ENCODE measurements at regions of chrX and their contacts with region 1.

Region 1: GRCh38 chrX:129606918-129607317 is 47.8 kb downstream of the APLN start:
- DNase-seq: peak; percentile 31
- H3K4me3 ChIP-seq: no peak overlapping the region
- H3K27ac ChIP-seq: no peak overlapping the region
- H3K4me1 ChIP-seq: no peaks in the 10 kb centered on the region
- H3K27me3 ChIP-seq: no peaks in the 10 kb centered on the region
- CTCF ChIP-seq: peak; percentile 72 to 89

Region 2: GRCh38 chrX:129496625-129497024 is 110.3 kb before region 1 on chrX:
- CTCF ChIA-PET with region 1: no interaction called
- dilution Hi-C with region 1: no loop called
- in situ Hi-C with region 1: no loop called
- intact Hi-C with region 1: no loop called
- DNase-seq: no peak
- H3K4me3 ChIP-seq: no peak overlapping the region
- H3K27ac ChIP-seq: no peak overlapping the region
- H3K4me1 ChIP-seq: no peaks in the 10 kb centered on the region
- H3K27me3 ChIP-seq: no peaks in the 10 kb centered on the region
- CTCF ChIP-seq: no peak

Region 3: GRCh38 chrX:129577473-129577872 is 29.4 kb before region 1 on chrX:
- CTCF ChIA-PET with region 1: no interaction called
- dilution Hi-C with region 1: no loop called
- in situ Hi-C with region 1: no loop called
- intact Hi-C with region 1: no loop called
- DNase-seq: peak; percentile 5
- H3K4me3 ChIP-seq: no peak overlapping the region
- H3K27ac ChIP-seq: no peak overlapping the region
- H3K4me1 ChIP-seq: no peaks in the 10 kb centered on the region
- H3K27me3 ChIP-seq: no peaks in the 10 kb centered on the region
- CTCF ChIP-seq: no peak

Region 4: DNA sequence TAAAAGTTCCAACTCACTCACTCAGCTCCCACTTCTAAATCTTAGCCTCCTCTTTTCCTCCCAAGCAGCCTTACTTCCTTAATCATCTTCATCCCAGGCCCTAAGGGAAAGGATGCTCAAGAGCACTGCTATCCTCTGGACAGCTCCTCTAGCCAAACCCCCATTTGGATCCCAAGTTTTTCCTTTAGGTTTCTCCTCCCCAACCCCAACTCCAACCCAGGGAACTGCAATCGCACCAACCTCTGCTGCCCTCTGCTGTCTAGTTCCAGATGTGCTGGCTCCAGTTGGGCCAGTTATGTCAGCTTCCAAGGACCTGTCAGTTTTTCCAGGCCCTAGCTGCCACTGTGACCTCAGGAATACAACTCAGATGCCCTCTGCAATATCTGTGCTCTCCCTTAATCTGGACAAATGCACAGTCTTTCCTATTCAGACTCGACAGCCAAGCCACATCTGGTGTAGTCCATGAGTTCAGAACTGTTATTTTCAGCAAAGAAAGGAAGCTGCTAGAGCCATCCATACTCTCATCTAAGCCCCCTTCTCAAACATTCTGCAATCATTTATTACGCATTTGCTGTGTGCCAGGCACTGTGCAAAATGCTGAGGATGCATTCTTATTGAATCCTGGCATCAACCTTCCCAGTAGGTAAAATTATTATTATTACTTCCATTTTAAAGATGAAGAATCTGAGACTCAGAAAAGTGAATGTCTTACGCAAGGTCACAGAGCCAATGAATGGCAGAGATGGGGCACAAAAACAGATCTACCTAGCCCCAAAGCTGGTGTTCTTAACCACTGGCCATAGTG is 119.6 kb after region 1 on chrX:
- CTCF ChIA-PET with region 1: no interaction called
- dilution Hi-C with region 1: no loop called
- in situ Hi-C with region 1: loop called in 1 of 2 experiments (anchors 5 kb)
- intact Hi-C with region 1: loop called (anchors 1 kb)
- DNase-seq: peak; percentile 34
- H3K4me3 ChIP-seq: no peak overlapping the region
- H3K27ac ChIP-seq: no peak overlapping the region
- H3K4me1 ChIP-seq: no peaks in the 10 kb centered on the region
- H3K27me3 ChIP-seq: no peaks in the 10 kb centered on the region
- CTCF ChIP-seq: peak; percentile 65 to 84

Region 5: GRCh38 chrX:129905787-129906580 is 299.1 kb after region 1 on chrX and contains the start of gene UTP14A:
- CTCF ChIA-PET with region 1: no interaction called
- dilution Hi-C with region 1: no loop called
- in situ Hi-C with region 1: no loop called
- intact Hi-C with region 1: loop called (anchors 10 kb)
- DNase-seq: peak; percentile 82
- H3K4me3 ChIP-seq: peak within 1 kb of the TSS; percentile 61 to 79 (median 73)
- H3K27ac ChIP-seq: peak within 1 kb of the TSS; percentile 64
- H3K4me1 ChIP-seq: peaks cover 7% of the 10 kb centered on the region
- H3K27me3 ChIP-seq: no peaks in the 10 kb centered on the region
- CTCF ChIP-seq: no peak
- total RNA-seq, gene UTP14A: 15.8 to 25.9 TPM

Region 6: GRCh38 chrX:130176354-130176776 is 569.4 kb after region 1 on chrX:
- CTCF ChIA-PET with region 1: no interaction called
- dilution Hi-C with region 1: no loop called
- in situ Hi-C with region 1: loop called in 1 of 2 experiments (anchors 25 kb)
- intact Hi-C with region 1: no loop called
- DNase-seq: no peak
- H3K4me3 ChIP-seq: no peak overlapping the region
- H3K27ac ChIP-seq: no peak overlapping the region
- H3K4me1 ChIP-seq: peaks cover 7% of the 10 kb centered on the region
- H3K27me3 ChIP-seq: no peaks in the 10 kb centered on the region
- CTCF ChIP-seq: no peak

Region 7: DNA sequence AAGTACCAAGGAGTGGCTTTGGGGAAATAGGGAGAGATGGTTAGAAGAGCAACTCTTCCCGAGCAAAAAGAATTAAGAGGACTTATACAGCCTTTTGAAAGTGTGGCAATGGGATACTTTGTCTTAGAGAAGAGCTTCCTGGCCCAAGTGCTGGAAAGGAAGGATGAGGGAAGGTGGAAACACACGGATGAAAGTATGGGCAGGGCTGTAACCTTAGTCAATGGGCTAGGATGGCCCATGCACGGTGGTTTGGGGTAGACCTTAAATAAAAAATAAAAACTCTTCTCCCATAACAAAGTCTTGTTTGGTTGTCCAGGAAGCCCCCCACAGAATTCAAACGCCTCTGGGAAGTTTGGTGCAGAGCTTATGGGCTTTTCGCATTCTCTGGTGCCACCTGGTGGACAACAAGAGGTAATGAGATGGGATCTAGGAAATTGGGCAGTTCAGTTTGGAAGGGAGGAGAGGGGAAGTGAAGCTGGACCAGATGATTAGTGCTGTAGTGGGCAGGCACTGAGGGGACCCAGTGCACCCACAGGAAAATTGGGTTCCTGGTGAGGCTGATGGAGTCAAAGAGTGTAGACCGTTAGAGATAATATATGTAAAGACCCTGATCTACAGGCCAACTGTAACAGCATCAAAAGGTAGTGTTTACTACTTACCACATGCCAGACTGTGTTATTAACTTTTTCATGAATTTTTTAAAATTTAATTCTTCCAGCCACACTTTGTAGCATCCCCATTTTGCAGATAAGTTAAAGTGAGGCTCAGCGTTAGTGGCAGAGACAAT is 1309.9 kb after region 1 on chrX:
- CTCF ChIA-PET with region 1: no interaction called
- dilution Hi-C with region 1: no loop called
- in situ Hi-C with region 1: loop called in 1 of 2 experiments (anchors 5 kb)
- intact Hi-C with region 1: loop called (anchors 5 kb)
- DNase-seq: peak; percentile 21
- H3K4me3 ChIP-seq: no peak overlapping the region
- H3K27ac ChIP-seq: no peak overlapping the region
- H3K4me1 ChIP-seq: no peaks in the 10 kb centered on the region
- H3K27me3 ChIP-seq: no peaks in the 10 kb centered on the region
- CTCF ChIP-seq: peak; percentile 65 to 87